ENCODE measurements at regions of chr7 and their contacts with region 1.

Region 1: GRCh38 chr7:1979591-1980560 is 252.9 kb downstream of the MAD1L1 start:
- DNase-seq: no peak
- H3K4me3 Mint-ChIP-seq: no peak overlapping the region
- H3K27ac Mint-ChIP-seq: no peak overlapping the region
- H3K4me1 Mint-ChIP-seq: peaks cover 8% of the 10 kb centered on the region
- H3K27me3 Mint-ChIP-seq: no peaks in the 10 kb centered on the region

Region 2: GRCh38 chr7:1593091-1593866 is 386.6 kb before region 1 on chr7:
- CTCF ChIA-PET with region 1: no interaction called
- intact Hi-C with region 1: loop called (anchors 10 kb)
- DNase-seq: peak; percentile 18
- H3K4me3 Mint-ChIP-seq: no peak overlapping the region
- H3K27ac Mint-ChIP-seq: no peak overlapping the region
- H3K4me1 Mint-ChIP-seq: peaks cover 19% of the 10 kb centered on the region
- H3K27me3 Mint-ChIP-seq: peaks cover 31% of the 10 kb centered on the region

Region 3: GRCh38 chr7:1842321-1843221 is 137.3 kb before region 1 on chr7:
- CTCF ChIA-PET with region 1: no interaction called
- intact Hi-C with region 1: no loop called
- DNase-seq: no peak
- H3K4me3 Mint-ChIP-seq: no peak overlapping the region
- H3K27ac Mint-ChIP-seq: no peak overlapping the region
- H3K4me1 Mint-ChIP-seq: peaks cover 3% of the 10 kb centered on the region
- H3K27me3 Mint-ChIP-seq: no peaks in the 10 kb centered on the region

Measured in activated naive CD4-positive, alpha-beta T cell treated with anti-CD3 and anti-CD28 coated beads for 36 hours (primary cell).